ENCODE measurements at regions of chr11 and their contacts with region 1.

Region 1: GRCh38 chr11:70191495-70192140 is 11.5 kb upstream of the FADD start:
- DNase-seq: peak; percentile 74 to 79
- ATAC-seq: peak; percentile 92 to 95
- H3K4me3 ChIP-seq: no peak overlapping the region
- H3K27ac ChIP-seq: no peak overlapping the region
- H3K4me1 ChIP-seq: no peaks in the 10 kb centered on the region
- CTCF ChIP-seq: peak; percentile 91
- EP300 ChIP-seq: no peak
- POLR2A ChIP-seq: no peak
- RAD21 ChIP-seq: peak; percentile 96 to 99

Region 2: GRCh38 chr11:69683764-69684333 is 507.8 kb before region 1 on chr11:
- CTCF ChIA-PET with region 1: interaction called, 14 read pairs
- POLR2A ChIA-PET with region 1: no interaction called
- DNase-seq: peak in 1 of 2 experiments; percentile 64
- ATAC-seq: peak in 1 of 2 experiments; percentile 75; a peak in 3 of 6 replicates
- H3K4me3 ChIP-seq: no peak overlapping the region
- H3K27ac ChIP-seq: no peak overlapping the region
- H3K4me1 ChIP-seq: peaks cover 12% of the 10 kb centered on the region; the same call in 2 of the 3 replicates
- CTCF ChIP-seq: peak; percentile 66
- EP300 ChIP-seq: no peak
- POLR2A ChIP-seq: no peak
- RAD21 ChIP-seq: peak; percentile 77 to 89

Region 3: DNA sequence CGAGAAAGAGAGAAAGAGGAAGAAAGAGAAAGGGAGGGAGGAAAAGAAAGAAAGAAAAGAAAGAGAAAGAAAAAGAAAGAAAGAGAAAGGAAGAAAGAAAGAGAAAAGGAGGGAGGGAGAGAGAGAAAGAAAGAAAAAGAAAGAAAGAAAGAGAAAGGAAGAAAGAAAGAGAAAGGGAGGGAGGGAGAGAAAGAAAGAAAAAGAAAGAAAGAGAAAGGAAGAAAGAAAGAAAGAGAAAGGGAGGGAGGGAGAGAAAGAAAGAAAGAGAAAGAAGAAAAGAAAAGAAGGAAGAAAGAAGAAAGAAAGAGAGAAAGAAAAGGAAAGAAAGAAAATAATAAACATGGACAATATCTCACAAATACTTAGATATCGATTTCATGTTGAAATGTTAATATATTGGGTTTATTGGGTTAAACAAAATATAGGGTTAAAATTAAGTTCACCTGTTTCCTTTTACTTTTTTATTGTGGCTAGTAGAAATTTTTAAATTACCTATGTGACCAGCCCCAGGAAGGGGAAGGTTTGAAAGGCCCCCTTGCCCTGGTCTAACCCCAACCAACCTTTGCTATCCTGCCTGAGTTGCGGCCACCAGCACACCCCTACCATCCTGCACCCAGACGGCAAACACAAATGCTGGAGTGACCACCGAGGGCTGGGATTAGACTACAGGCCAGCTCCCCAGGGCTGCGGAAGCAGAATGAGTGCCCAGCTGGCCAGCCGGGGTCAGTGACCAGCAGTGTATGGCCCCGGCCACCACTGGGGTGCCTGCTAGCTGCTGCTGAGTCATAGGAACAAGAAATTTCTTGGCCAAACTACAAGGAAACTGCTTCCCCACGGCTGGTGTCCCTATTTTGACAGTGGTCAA is 291.4 kb before region 1 on chr11:
- CTCF ChIA-PET with region 1: interaction called, 19 read pairs
- POLR2A ChIA-PET with region 1: no interaction called
- DNase-seq: peak in 1 of 2 experiments; percentile 56
- ATAC-seq: peak; percentile 65 to 81; a peak in 5 of 6 replicates
- H3K4me3 ChIP-seq: no peak overlapping the region
- H3K27ac ChIP-seq: peak overlapping the region; percentile 33 to 75; a peak in 5 of 6 replicates
- H3K4me1 ChIP-seq: peaks cover 16% of the 10 kb centered on the region
- CTCF ChIP-seq: no peak
- EP300 ChIP-seq: no peak
- POLR2A ChIP-seq: no peak
- RAD21 ChIP-seq: no peak

Region 4: DNA sequence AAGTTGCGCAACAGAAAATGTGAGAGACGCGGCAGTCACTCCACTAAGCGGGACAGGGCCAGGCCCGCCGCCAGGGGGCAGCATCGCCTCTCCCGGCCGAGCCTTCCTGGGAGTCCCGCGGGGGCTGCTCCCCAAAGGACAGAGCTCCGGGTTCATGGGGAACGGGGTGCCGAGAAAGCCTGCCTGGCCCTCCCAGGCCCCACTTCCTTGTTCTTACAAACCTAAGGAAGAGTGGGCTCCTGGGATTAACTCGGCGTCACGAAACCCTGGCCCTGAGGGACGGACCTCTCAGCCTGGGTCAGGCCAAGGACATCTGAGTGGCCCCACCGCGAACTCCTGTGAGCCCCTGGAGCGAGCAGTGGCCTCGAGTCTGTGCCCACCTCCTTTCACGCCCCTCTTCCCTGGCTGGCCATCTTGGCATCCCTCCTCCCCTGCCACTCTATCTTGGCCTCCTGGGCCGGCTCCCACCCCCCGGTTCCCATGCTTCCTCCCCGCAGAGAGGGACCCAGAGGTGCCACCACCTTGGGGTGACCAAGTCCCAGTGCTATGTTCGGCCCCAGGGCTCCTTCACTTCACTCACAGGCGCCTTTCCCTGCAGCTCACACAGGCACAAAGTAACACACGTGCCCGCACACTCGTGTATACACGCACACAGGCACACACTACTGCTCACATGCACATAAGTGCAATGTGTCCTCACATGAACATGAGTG is 272.5 kb before region 1 on chr11:
- CTCF ChIA-PET with region 1: interaction called, 233 read pairs
- POLR2A ChIA-PET with region 1: interaction called, 3 read pairs
- DNase-seq: peak; percentile 65 to 68
- ATAC-seq: peak; percentile 32 to 85; a peak in 5 of 6 replicates
- H3K4me3 ChIP-seq: no peak overlapping the region
- H3K27ac ChIP-seq: peak overlapping the region; percentile 31 to 33; a peak in 1 of 6 replicates
- H3K4me1 ChIP-seq: peaks cover 8% of the 10 kb centered on the region; the same call in 1 of the 3 replicates
- CTCF ChIP-seq: peak; percentile 94
- EP300 ChIP-seq: no peak
- POLR2A ChIP-seq: no peak
- RAD21 ChIP-seq: peak; percentile 87 to 94

Region 5: GRCh38 chr11:69943066-69943465 is 248.6 kb before region 1 on chr11:
- CTCF ChIA-PET with region 1: interaction called, 19 read pairs
- POLR2A ChIA-PET with region 1: no interaction called
- DNase-seq: peak; percentile 35 to 51
- ATAC-seq: peak; percentile 62 to 85; a peak in 4 of 6 replicates
- H3K4me3 ChIP-seq: no peak overlapping the region
- H3K27ac ChIP-seq: peak overlapping the region; percentile 11 to 43; a peak in 1 of 6 replicates
- H3K4me1 ChIP-seq: peaks cover 7% of the 10 kb centered on the region
- CTCF ChIP-seq: peak; percentile 50
- EP300 ChIP-seq: no peak
- POLR2A ChIP-seq: no peak
- RAD21 ChIP-seq: peak; percentile 70 to 80

Region 6: DNA sequence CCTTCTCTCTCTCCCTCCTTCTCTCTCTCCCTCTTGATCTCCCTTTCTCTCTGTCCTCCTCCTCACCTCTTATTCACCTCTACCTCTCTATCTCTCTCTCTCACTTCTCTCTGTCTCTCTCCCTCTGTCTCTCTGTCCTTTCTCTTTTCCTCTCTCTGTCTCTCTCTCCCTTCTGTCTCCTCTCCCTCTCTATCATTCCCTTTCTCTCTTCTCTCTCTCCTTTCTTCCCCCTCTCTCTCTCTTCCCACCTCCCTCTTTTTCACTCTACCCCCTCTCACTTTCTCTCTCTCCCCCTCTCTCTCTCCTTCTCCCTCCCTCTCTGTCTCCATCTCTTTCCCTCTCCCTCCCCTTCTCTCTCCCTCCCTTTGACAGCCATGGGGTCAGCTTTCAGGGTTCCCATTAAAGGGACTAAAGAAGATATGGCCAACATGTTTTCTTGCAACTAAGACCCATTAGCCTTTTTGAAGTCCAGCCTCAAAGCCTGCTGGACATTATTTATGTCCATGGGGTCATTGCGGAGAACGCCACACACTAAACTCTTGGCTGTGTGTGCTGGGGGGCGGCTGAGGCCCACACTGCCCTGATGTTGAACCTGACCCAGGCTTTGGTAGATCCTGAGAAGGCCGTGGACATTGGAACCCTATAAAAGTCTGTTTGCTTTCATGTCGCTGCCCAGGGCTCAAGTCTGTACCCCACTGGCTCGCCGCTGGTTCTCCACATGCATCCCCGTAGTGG is 98.5 kb before region 1 on chr11:
- CTCF ChIA-PET with region 1: no interaction called
- POLR2A ChIA-PET with region 1: no interaction called
- DNase-seq: no peak
- ATAC-seq: no peak
- H3K4me3 ChIP-seq: no peak overlapping the region
- H3K27ac ChIP-seq: no peak overlapping the region
- H3K4me1 ChIP-seq: no peaks in the 10 kb centered on the region
- CTCF ChIP-seq: no peak
- EP300 ChIP-seq: no peak
- POLR2A ChIP-seq: no peak
- RAD21 ChIP-seq: no peak

Region 7: DNA sequence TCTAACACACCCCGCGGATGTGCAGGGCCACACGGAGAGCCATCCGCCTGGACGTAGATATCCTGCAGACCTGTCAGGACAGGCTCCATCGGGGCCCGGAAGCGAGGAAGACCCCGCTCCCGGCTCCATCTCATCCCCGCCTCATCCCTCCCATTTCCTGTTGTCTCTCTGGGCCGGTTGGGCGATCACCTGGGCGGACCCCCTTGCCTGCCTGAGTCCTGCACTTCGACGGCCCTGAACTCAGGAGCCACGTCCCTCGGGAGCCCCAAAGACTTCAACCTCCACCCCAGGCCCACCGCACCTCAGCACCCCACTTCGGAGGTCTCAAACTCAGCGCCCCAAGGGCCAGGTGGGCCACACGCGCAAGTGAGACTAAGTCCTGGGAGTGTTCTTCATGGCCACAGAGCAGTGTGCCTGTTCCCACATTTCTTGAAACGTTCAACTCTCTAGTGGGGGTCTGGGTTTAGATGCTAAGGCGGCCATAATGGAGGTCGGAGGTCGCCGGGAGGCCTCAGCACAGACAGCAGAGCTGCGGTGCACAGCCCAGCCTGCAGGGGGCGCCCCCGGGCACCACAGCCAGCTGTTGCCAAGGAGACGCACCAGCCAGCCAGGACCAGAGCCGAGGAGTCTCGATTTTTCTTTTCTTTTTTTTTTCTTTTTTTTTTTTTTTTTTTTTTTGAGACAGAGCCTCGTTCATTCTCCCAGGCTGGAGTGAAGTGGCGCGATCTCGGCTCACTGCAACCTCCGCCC is 14.5 kb before region 1 on chr11:
- CTCF ChIA-PET with region 1: interaction called, 16 read pairs
- POLR2A ChIA-PET with region 1: no interaction called
- DNase-seq: peak; percentile 53 to 92
- ATAC-seq: peak; percentile 65 to 87; a peak in 3 of 6 replicates
- H3K4me3 ChIP-seq: no peak overlapping the region
- H3K27ac ChIP-seq: no peak overlapping the region
- H3K4me1 ChIP-seq: no peaks in the 10 kb centered on the region
- CTCF ChIP-seq: peak; percentile 49
- EP300 ChIP-seq: no peak
- POLR2A ChIP-seq: no peak
- RAD21 ChIP-seq: no peak; a peak in 1 of 5 replicates

Region 8: DNA sequence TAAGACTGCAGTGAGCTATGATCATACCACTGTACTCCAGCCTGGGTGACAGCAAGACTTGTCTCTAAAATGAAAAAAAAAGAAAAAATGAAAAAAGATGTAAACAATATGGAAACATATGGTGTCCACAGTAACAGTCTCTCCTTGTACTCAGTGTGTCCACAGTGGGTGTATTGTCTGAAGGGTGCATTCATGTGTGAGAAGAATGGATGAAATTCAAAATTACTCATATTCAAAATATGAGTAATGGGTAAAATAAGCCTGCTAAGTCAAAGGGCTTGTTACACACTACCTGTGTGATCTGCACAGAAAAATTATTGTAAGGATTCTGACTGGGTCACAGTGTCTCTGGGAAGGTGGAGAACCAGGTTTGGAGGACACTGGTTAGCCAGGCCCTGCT is 105.7 kb after region 1 on chr11:
- CTCF ChIA-PET with region 1: no interaction called
- POLR2A ChIA-PET with region 1: no interaction called
- DNase-seq: no peak
- ATAC-seq: peak in 1 of 2 experiments; percentile 45; a peak in 3 of 6 replicates
- H3K4me3 ChIP-seq: no peak overlapping the region
- H3K27ac ChIP-seq: no peak overlapping the region
- H3K4me1 ChIP-seq: 0 out of 3 replicates have a peak, but pooled peaks cover 2% of the 10 kb centered on the region
- CTCF ChIP-seq: no peak
- EP300 ChIP-seq: no peak
- POLR2A ChIP-seq: no peak
- RAD21 ChIP-seq: no peak

Region 9: DNA sequence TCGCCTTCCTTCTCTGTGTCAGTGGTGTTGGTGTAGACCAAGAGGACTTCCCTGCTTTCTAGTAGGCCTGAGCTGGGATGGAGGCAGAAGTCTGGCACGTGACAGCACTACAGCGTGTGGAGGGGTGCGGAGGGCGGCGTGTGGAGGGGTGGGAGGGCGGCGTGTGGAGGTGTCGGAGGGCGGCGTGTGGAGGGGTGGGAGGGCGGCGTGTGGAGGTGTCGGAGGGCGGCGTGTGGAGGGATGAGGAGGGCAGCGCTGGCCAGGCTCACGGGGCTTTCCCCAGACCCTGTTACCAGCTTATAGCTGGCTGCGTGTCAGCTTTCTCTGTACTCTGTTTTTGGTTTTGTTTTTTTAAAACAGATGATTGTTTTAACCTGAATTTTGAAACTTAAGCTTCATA is 161.0 kb after region 1 on chr11:
- CTCF ChIA-PET with region 1: no interaction called
- POLR2A ChIA-PET with region 1: no interaction called
- DNase-seq: no peak
- ATAC-seq: no peak
- H3K4me3 ChIP-seq: no peak overlapping the region
- H3K27ac ChIP-seq: no peak overlapping the region
- H3K4me1 ChIP-seq: no peaks in the 10 kb centered on the region
- CTCF ChIP-seq: no peak
- EP300 ChIP-seq: no peak
- POLR2A ChIP-seq: no peak
- RAD21 ChIP-seq: no peak